ENCODE measurements at regions of chrX and their contacts with region 1.

Region 1: GRCh38 chrX:40647307-40648197 is at the start of gene CXorf38:
- DNase-seq: peak; percentile 91 to 95
- ATAC-seq: peak; percentile 71 to 83 (median 79)
- H3K4me3 ChIP-seq: peak within 1 kb of the TSS; percentile 78
- H3K4me3 Mint-ChIP-seq: peak within 1 kb of the TSS; percentile 96
- H3K27ac ChIP-seq: peak within 1 kb of the TSS; percentile 89
- H3K27ac Mint-ChIP-seq: peak within 1 kb of the TSS; percentile 93 to 96
- H3K4me1 ChIP-seq: peaks cover 36% of the 10 kb centered on the region
- H3K4me1 Mint-ChIP-seq: peaks cover 38 to 42% of the 10 kb centered on the region in 2 donors
- H3K27me3 ChIP-seq: no peaks in the 10 kb centered on the region
- H3K27me3 Mint-ChIP-seq: no peaks in the 10 kb centered on the region
- CTCF ChIP-seq: no peak
- total RNA-seq, gene CXorf38: 27.5 to 46.1 (median 30.9) TPM

Region 2: GRCh38 chrX:40434947-40435346 is 212.6 kb before region 1 on chrX:
- intact Hi-C with region 1: no loop called
- DNase-seq: no peak
- ATAC-seq: no peak
- H3K4me3 ChIP-seq: no peak overlapping the region
- H3K4me3 Mint-ChIP-seq: no peak overlapping the region
- H3K27ac ChIP-seq: no peak overlapping the region
- H3K27ac Mint-ChIP-seq: no peak overlapping the region
- H3K4me1 ChIP-seq: no peaks in the 10 kb centered on the region
- H3K4me1 Mint-ChIP-seq: no peaks in the 10 kb centered on the region
- H3K27me3 ChIP-seq: no peaks in the 10 kb centered on the region
- H3K27me3 Mint-ChIP-seq: peaks cover 0 to 28% of the 10 kb centered on the region in 2 donors
- CTCF ChIP-seq: no peak

Region 3: DNA sequence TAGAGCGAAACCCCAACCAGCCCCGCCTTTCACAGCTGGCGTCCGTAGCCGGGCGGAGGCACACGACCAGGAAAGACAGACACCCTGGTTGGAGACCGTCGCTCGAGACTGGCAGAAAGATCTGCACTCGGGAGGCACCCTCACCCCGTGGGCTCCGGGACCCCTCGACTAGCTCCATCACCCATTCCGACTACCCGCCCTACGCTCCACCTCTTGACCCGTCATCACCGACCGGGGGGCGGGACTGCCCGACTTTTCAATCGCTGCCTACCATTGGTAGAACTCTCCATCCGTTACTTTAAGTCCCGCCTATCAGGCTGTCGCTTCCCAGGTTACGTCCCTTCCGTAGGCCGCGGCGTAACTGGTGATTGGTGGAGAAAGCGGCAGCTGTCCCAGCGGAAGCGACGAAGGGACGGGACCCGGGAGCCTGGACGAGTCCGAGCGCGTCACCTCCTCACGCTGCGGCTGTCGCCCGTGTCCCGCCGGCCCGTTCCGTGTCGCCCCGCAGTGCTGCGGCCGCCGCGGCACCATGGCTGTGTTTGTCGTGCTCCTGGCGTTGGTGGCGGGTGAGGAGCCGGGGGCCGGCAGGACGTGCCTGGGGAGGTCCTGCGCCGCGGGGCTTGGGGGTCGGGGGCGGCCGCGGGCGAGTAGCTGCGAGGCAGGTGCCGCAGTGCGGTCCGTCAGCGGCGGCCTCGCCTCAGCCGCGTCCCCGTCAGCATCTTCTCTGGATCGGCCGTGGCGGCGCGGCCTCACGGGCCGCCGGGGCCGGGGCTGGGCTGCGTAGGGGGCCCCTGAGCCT is 66.8 kb before region 1 on chrX and contains the start of gene ATP6AP2:
- intact Hi-C with region 1: loop called (anchors 1 kb)
- DNase-seq: peak; percentile 81 to 94
- ATAC-seq: peak; percentile 92 to 97 (median 93)
- H3K4me3 ChIP-seq: peak within 1 kb of the TSS; percentile 69
- H3K4me3 Mint-ChIP-seq: peak within 1 kb of the TSS; percentile 93
- H3K27ac ChIP-seq: peak within 1 kb of the TSS; percentile 90
- H3K27ac Mint-ChIP-seq: peak within 1 kb of the TSS; percentile 95 to 98
- H3K4me1 ChIP-seq: peaks cover 20% of the 10 kb centered on the region
- H3K4me1 Mint-ChIP-seq: peaks cover 11 to 29% of the 10 kb centered on the region in 2 donors
- H3K27me3 ChIP-seq: no peaks in the 10 kb centered on the region
- H3K27me3 Mint-ChIP-seq: peaks cover 0 to 6% of the 10 kb centered on the region in 2 donors
- CTCF ChIP-seq: no peak
- total RNA-seq, gene ATP6AP2: 94.3 to 102 (median 99.9) TPM

Region 4: GRCh38 chrX:40792433-40792832 is 144.9 kb after region 1 on chrX:
- intact Hi-C with region 1: loop called (anchors 1 kb)
- DNase-seq: no peak
- ATAC-seq: no peak
- H3K4me3 ChIP-seq: no peak overlapping the region
- H3K4me3 Mint-ChIP-seq: no peak overlapping the region
- H3K27ac ChIP-seq: no peak overlapping the region
- H3K27ac Mint-ChIP-seq: no peak overlapping the region
- H3K4me1 ChIP-seq: peaks cover 5% of the 10 kb centered on the region
- H3K4me1 Mint-ChIP-seq: peaks cover 0 to 6% of the 10 kb centered on the region in 2 donors
- H3K27me3 ChIP-seq: no peaks in the 10 kb centered on the region
- H3K27me3 Mint-ChIP-seq: peaks cover 6 to 34% of the 10 kb centered on the region in 2 donors
- CTCF ChIP-seq: no peak

Region 5: GRCh38 chrX:41116948-41117347 is 469.4 kb after region 1 on chrX:
- intact Hi-C with region 1: loop called (anchors 10 kb)
- DNase-seq: peak in 1 of 2 donors; percentile 63
- ATAC-seq: peak; percentile 64 to 79 (median 78)
- H3K4me3 ChIP-seq: no peak overlapping the region
- H3K4me3 Mint-ChIP-seq: peak overlapping the region; percentile 40
- H3K27ac ChIP-seq: peak overlapping the region; percentile 38
- H3K27ac Mint-ChIP-seq: peak overlapping the region; percentile 52 to 83
- H3K4me1 ChIP-seq: peaks cover 13% of the 10 kb centered on the region
- H3K4me1 Mint-ChIP-seq: peaks cover 54 to 59% of the 10 kb centered on the region in 2 donors
- H3K27me3 ChIP-seq: no peaks in the 10 kb centered on the region
- H3K27me3 Mint-ChIP-seq: no peaks in the 10 kb centered on the region
- CTCF ChIP-seq: no peak